Right cardiac atrium (tissue), 5 donors: ENCODE measurements at regions of chr5 and their contacts with region 1.

Region 1: GRCh38 chr5:40904205-40904993 is 4.9 kb upstream of the C7 start:
- DNase-seq: peak; percentile 62 to 79 (median 66)
- ATAC-seq: peak; percentile 94 to 95
- H3K4me3 ChIP-seq: no peak overlapping the region
- H3K27ac ChIP-seq: peak overlapping the region; percentile 20
- H3K4me1 ChIP-seq: no peaks in the 10 kb centered on the region
- H3K27me3 ChIP-seq: no peaks in the 10 kb centered on the region

Region 2: GRCh38 chr5:40587284-40587882 is 317.0 kb before region 1 on chr5:
- intact Hi-C with region 1: no loop called
- DNase-seq: no peak
- ATAC-seq: no peak
- H3K4me3 ChIP-seq: no peak overlapping the region
- H3K27ac ChIP-seq: no peak overlapping the region
- H3K4me1 ChIP-seq: no peaks in the 10 kb centered on the region
- H3K27me3 ChIP-seq: no peaks in the 10 kb centered on the region

Region 3: GRCh38 chr5:41264019-41264418 is 359.6 kb after region 1 on chr5:
- intact Hi-C with region 1: loop called in 1 of 4 experiments (anchors 10 kb)
- DNase-seq: peak in 1 of 3 donors; percentile 49
- ATAC-seq: peak; percentile 91 to 98
- H3K4me3 ChIP-seq: no peak overlapping the region
- H3K27ac ChIP-seq: peak overlapping the region; percentile 30
- H3K4me1 ChIP-seq: peaks cover 3% of the 10 kb centered on the region
- H3K27me3 ChIP-seq: no peaks in the 10 kb centered on the region

Region 4: GRCh38 chr5:41510176-41510831 is 605.9 kb after region 1 on chr5 and contains the start of gene PLCXD3:
- intact Hi-C with region 1: loop called in 1 of 4 experiments (anchors 10 kb)
- DNase-seq: peak; percentile 61 to 87 (median 73)
- ATAC-seq: peak; percentile 93 to 94
- H3K4me3 ChIP-seq: peak within 1 kb of the TSS; percentile 74
- H3K27ac ChIP-seq: peak within 1 kb of the TSS; percentile 44
- H3K4me1 ChIP-seq: no peaks in the 10 kb centered on the region
- H3K27me3 ChIP-seq: no peaks in the 10 kb centered on the region
- total RNA-seq, gene PLCXD3: 32.7 to 87.4 (median 62.3) TPM

Region 5: GRCh38 chr5:41641621-41642020 is 737.2 kb after region 1 on chr5:
- intact Hi-C with region 1: loop called in 2 of 4 experiments (anchors 10 kb)
- DNase-seq: no peak
- ATAC-seq: no peak
- H3K4me3 ChIP-seq: no peak overlapping the region
- H3K27ac ChIP-seq: no peak overlapping the region
- H3K4me1 ChIP-seq: no peaks in the 10 kb centered on the region
- H3K27me3 ChIP-seq: no peaks in the 10 kb centered on the region